SK-N-SH (cell line): ENCODE measurements at regions of chr16 and their contacts with region 1.

Region 1: DNA sequence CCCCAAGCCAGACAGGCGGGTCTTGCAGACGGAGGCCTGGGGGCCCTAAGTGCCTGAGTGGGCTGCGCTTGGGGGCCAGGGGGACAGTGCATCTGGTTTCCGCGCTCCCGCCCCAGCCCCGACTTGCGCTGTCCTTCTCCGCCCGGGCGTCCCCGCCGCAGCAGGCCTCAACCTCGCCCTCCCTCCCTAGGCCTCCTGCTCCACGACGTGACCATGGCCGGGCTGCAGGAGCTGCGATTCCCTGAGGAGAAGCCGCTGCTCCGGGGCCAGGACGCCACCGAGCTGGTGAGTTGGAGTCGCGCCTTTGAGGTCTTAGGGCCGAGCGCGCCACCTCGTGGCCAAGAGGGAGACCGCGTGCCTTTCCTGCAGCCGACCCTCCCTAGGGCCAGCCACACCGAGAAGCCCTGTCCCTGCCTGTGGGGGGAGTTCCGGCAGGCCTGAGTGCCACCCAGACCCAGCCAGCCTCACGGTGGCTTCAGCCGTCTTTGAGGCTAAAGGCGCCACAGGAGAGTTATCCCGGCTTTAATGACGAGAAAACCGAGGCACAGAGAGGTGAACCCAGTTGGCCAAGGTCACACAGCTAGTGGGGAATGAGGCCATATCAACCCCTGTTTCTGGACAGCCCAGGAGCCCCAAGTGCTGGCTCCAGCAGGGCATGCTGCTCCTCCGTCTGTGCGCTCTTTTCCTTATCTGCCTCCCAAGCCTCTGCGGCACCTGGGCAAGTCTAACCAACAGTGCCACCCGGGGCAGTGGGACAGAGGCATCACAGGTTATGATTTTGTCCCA is 12.2 kb upstream of the NDRG4 start:
- DNase-seq: peak; percentile 92
- H3K4me3 ChIP-seq: no peak overlapping the region
- H3K27ac ChIP-seq: no peak overlapping the region
- H3K4me1 ChIP-seq: peaks cover 0 to 18% of the 10 kb centered on the region in 2 experiments; a peak in 1 of 4 replicates
- H3K27me3 ChIP-seq: no peaks in the 10 kb centered on the region
- CTCF ChIP-seq: peak; percentile 87
- EP300 ChIP-seq: no peak
- RAD21 ChIP-seq: peak; percentile 97

Region 2: GRCh38 chr16:58329147-58329546 is 158.6 kb before region 1 on chr16:
- CTCF ChIA-PET with region 1: interaction called, 542 read pairs
- POLR2A ChIA-PET with region 1: no interaction called
- DNase-seq: no peak
- H3K4me3 ChIP-seq: no peak overlapping the region
- H3K27ac ChIP-seq: no peak overlapping the region
- H3K4me1 ChIP-seq: no peaks in the 10 kb centered on the region; a peak in 2 of 4 replicates
- H3K27me3 ChIP-seq: no peaks in the 10 kb centered on the region
- CTCF ChIP-seq: no peak
- EP300 ChIP-seq: no peak
- RAD21 ChIP-seq: no peak

Region 3: GRCh38 chr16:58392215-58393137 is 95.3 kb before region 1 on chr16 and contains the start of gene GINS3:
- CTCF ChIA-PET with region 1: interaction called, 16 read pairs
- POLR2A ChIA-PET with region 1: no interaction called
- DNase-seq: peak; percentile 91
- H3K4me3 ChIP-seq: peak within 1 kb of the TSS; percentile 88 to 89
- H3K27ac ChIP-seq: peak within 1 kb of the TSS; percentile 64 to 78
- H3K4me1 ChIP-seq: peaks cover 0 to 4% of the 10 kb centered on the region in 2 experiments; a peak in 1 of 4 replicates
- H3K27me3 ChIP-seq: no peaks in the 10 kb centered on the region
- CTCF ChIP-seq: no peak
- EP300 ChIP-seq: no peak
- RAD21 ChIP-seq: no peak
- polyA plus RNA-seq, gene GINS3: 8.7 and 9.8 TPM in 2 replicates

Region 4: GRCh38 chr16:58409316-58409973 is 78.3 kb before region 1 on chr16:
- CTCF ChIA-PET with region 1: interaction called, 13 read pairs
- POLR2A ChIA-PET with region 1: no interaction called
- DNase-seq: no peak
- H3K4me3 ChIP-seq: no peak overlapping the region
- H3K27ac ChIP-seq: peak overlapping the region; percentile 44 to 45; a peak in 2 of 4 replicates
- H3K4me1 ChIP-seq: peaks cover 5 to 8% of the 10 kb centered on the region in 2 experiments; a peak in 1 of 4 replicates
- H3K27me3 ChIP-seq: no peaks in the 10 kb centered on the region
- CTCF ChIP-seq: no peak
- EP300 ChIP-seq: peak; percentile 48 to 72; a peak in 3 of 4 replicates
- RAD21 ChIP-seq: no peak

Region 5: DNA sequence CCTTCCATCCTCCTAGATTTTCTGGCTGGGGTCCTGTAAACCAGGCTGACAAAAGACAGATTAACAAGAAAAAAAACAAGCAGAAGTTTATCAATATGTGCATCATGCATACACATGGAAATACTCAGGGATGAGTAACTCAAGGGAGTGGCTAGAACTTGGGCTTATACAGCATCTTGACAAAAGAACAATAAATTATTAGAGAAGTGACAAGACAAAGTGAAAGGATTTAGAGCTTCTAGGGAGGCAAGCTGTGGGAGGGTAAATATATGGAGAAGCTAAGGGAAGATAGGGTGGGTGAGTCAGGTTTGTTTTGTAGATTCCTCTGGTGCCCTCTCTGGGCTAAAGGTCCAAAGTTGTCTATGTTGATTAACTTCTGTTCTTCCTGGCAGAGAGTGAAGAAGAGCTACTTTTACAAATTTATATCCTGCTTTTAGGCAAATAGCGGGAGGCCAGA is 35.8 kb before region 1 on chr16:
- CTCF ChIA-PET with region 1: interaction called, 26 read pairs
- POLR2A ChIA-PET with region 1: no interaction called
- DNase-seq: no peak
- H3K4me3 ChIP-seq: no peak overlapping the region
- H3K27ac ChIP-seq: peak overlapping the region; percentile 62 to 70
- H3K4me1 ChIP-seq: peaks cover 6 to 43% of the 10 kb centered on the region in 2 experiments
- H3K27me3 ChIP-seq: no peaks in the 10 kb centered on the region
- CTCF ChIP-seq: no peak
- EP300 ChIP-seq: peak; percentile 67 to 69; a peak in 2 of 4 replicates
- RAD21 ChIP-seq: peak; percentile 30

Region 6: GRCh38 chr16:58464047-58464915 is 23.5 kb before region 1 on chr16:
- CTCF ChIA-PET with region 1: interaction called, 16 read pairs
- POLR2A ChIA-PET with region 1: interaction called, 3 read pairs
- DNase-seq: peak; percentile 82
- H3K4me3 ChIP-seq: peak overlapping the region; percentile 49 to 58
- H3K27ac ChIP-seq: no peak overlapping the region
- H3K4me1 ChIP-seq: peaks cover 0 to 5% of the 10 kb centered on the region in 2 experiments; a peak in 1 of 4 replicates
- H3K27me3 ChIP-seq: peaks cover 38% of the 10 kb centered on the region
- CTCF ChIP-seq: no peak
- EP300 ChIP-seq: no peak
- RAD21 ChIP-seq: no peak

Region 7: DNA sequence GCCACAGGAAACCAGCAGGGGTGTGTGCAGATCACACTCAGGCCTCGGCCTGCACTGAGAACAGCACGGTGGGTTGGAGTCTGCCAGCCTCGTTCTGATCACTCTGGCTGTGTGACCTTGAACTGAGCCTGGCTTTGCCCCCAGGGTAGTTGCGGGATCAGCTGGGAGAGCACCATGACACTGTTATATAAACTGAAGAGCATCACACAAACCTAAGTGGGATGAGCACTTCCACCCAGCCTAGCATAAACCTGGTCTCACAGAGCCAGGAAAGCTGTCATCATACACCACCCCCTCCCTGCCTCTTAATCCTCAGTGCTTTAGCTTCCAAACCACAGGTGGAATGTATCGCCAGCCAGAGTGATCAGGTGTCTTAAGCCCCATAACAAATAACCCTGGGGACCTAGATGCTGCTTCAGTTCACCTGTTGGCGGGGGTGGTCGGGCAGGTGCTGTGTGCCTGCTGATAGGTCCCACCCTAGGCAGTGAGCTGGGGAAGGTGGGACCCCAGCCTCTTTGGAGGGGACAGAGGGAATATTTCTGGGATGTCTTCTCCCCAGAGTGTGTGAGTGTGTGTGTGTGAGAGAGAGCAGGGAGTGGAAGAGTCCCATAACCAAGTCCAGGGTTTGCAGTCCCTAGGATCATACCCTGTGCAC is 16.3 kb before region 1 on chr16:
- CTCF ChIA-PET with region 1: interaction called, 34 read pairs
- POLR2A ChIA-PET with region 1: interaction called, 3 read pairs
- DNase-seq: no peak
- H3K4me3 ChIP-seq: no peak overlapping the region
- H3K27ac ChIP-seq: no peak overlapping the region
- H3K4me1 ChIP-seq: no peaks in the 10 kb centered on the region; a peak in 1 of 4 replicates
- H3K27me3 ChIP-seq: peaks cover 4% of the 10 kb centered on the region; the same call in 1 of the 2 replicates
- CTCF ChIP-seq: no peak
- EP300 ChIP-seq: no peak
- RAD21 ChIP-seq: no peak